ENCODE measurements at regions of chr19 and their contacts with region 1.

Region 1: DNA sequence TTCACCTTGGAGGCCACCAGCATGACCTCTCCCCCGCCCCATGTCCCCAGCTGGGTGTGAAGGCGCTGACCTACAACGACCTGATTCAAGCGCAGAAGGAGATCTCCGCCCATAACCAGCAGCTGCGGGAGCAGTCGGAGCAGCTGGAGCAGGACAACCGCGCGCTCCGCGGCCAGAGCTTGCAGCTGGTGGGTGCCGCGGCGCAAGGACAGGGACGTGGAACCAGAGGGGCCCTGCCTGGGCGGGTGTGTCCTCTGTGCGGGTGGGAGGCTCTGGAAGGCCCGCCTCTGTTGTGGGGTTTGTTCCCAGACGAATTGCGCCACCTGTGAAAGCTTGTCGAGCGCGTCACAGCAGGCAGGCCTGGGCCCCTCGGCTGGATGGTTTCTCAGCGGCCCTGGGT is 22.3 kb downstream of the PLEKHJ1 start:
- DNase-seq: no peak

Region 2: GRCh38 chr19:741506-742131 is 1472.2 kb before region 1 on chr19:
- intact Hi-C with region 1: loop called in 1 of 2 experiments (anchors 5 kb)
- DNase-seq: no peak

Region 3: GRCh38 chr19:2135474-2136402 is 78.1 kb before region 1 on chr19:
- intact Hi-C with region 1: no loop called
- DNase-seq: peak; percentile 67

Region 4: DNA sequence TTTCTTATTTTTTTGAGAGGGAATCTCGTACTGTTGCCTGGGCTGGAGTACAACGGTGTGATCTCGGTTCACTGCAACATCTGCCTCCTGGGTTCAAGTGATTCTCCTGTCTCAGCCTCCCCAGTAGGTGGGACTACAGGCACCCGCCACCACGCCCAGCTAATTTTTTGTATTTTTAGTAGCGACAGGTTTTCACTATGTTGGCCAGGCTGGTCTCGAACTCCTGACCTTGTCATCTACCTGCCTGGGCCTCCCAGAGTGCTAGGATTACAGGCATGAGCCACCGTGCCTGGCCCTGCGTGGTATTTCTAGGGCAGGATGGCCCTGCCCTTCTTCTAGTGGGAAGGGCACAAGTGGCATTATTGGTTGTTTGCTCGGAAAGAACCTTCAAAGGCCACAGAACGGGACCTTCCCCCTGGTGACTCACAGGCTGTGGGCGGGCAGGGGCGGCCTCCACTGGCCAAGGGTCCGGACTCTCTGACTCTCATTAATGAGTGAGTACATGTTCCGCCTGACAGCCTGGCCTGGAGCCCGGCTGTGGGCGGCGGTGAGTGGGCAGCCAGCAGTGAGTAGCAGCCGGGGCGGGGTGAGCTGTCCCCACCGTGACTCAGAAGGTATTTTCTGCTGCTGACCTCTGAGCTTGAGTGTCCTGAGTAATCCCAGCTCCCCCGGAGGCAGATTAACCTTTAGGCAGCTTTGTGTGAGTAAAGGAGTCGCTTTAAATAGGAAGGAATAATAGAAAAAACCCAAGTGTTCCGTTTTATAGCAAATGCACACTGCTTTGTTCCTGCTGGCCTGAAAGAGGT is 45.0 kb before region 1 on chr19:
- intact Hi-C with region 1: no loop called
- DNase-seq: peak; percentile 99

Region 5: DNA sequence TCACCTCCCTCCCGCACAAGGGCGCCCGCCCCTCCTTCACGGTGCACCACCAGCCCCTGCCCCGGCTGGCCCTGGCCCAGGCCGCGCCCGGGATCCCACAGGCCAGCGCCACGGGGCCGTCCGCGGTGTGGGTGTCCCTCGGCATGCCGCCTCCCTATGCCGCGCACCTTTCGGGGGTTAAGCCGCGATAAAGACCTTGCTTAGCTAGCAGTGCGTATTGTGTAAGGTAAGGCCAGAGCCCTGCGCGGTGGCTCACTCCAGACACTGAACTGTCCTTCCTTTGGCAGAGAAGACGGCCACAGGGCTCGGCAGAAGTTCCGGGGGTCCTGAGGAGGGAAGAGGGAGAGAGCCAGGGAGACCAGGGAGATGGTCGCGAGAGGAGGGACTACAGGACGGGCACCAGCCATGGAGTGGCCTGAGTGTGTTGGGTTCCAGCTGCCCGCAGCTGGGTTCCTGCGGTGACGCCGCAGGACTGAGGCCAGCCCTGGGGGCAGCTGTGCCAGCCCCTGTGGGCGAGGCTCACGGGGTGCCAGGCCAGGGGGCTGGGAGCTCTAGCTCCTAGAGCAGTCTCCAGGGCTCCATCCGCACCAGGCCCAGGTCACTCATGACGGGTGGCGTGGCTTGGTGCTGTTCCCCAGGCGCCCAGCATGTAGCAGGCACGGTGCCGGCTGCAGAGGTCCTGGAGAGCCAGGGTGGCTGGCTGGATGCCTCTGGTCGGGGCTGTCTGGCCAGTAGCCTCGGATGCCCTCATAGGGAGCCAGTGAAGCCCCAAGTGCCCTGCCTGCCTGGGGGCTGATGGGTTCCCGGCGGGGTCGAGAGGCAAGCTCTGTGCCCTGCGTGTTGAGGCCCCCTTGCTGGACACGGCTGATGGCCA is 14.6 kb after region 1 on chr19:
- intact Hi-C with region 1: loop called in 1 of 2 experiments (anchors 1 kb)
- DNase-seq: no peak

Region 6: GRCh38 chr19:2246801-2247361 is 33.1 kb after region 1 on chr19:
- intact Hi-C with region 1: no loop called
- DNase-seq: no peak

Measured in posterior vena cava (tissue), 2 donors.